ENCODE measurements at regions of chr6 and their contacts with region 1.

Region 1: DNA sequence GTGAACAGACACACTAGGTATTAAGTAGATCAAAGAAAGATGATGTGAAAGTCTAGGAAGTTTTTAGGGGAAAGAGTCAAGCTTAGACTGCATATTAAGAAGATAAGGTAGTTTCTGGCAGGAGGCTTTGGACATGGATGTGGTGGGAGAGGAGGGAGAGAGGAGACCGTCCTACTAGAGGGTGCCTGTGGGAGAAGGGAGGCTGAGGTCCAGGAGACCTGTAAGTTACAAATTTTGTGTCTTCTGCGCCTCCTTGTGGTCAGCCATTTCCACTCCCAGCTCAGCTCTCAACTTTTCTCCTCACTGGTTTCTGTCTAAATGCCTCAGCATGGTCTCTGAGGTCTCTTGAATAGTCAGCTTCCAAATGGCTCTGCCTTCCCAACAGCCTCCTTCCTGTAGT is 193.5 kb downstream of the UNC5CL start:
- DNase-seq: peak; percentile 23
- H3K4me3 ChIP-seq: no peak overlapping the region
- CTCF ChIP-seq: peak; percentile 65

Region 2: GRCh38 chr6:40780637-40781036 is 64.9 kb before region 1 on chr6:
- in situ Hi-C with region 1: loop called (anchors 5 kb)
- DNase-seq: no peak
- H3K4me3 ChIP-seq: no peak overlapping the region
- CTCF ChIP-seq: no peak

Region 3: GRCh38 chr6:40907198-40907704 is 61.7 kb after region 1 on chr6:
- in situ Hi-C with region 1: loop called (anchors 10 kb)
- DNase-seq: peak; percentile 8
- H3K4me3 ChIP-seq: no peak overlapping the region
- CTCF ChIP-seq: no peak

Region 4: DNA sequence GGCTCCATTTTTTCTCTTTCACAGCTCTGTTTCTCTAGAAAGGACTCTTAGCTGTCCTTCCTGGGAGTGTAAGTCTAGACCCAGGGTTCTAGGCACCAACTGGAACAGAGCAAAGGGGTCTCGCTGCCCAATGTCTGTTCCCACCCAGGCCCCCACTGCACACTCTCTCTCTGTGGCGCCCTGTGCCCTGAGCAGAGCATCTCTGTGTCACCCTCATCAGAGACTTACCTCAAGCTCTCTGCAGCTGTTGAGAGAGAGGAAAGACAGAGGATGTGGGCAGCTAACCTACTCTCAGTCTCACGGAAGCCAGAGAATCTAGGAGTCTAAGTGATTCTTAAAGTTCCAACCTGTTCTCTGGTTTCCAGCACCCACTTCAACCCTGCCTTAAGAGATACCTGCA is 499.3 kb after region 1 on chr6:
- in situ Hi-C with region 1: no loop called
- DNase-seq: no peak
- H3K4me3 ChIP-seq: no peak overlapping the region
- CTCF ChIP-seq: no peak